OCI-LY7 (cell line): ENCODE measurements at regions of chr1 and their contacts with region 1.

Region 1: DNA sequence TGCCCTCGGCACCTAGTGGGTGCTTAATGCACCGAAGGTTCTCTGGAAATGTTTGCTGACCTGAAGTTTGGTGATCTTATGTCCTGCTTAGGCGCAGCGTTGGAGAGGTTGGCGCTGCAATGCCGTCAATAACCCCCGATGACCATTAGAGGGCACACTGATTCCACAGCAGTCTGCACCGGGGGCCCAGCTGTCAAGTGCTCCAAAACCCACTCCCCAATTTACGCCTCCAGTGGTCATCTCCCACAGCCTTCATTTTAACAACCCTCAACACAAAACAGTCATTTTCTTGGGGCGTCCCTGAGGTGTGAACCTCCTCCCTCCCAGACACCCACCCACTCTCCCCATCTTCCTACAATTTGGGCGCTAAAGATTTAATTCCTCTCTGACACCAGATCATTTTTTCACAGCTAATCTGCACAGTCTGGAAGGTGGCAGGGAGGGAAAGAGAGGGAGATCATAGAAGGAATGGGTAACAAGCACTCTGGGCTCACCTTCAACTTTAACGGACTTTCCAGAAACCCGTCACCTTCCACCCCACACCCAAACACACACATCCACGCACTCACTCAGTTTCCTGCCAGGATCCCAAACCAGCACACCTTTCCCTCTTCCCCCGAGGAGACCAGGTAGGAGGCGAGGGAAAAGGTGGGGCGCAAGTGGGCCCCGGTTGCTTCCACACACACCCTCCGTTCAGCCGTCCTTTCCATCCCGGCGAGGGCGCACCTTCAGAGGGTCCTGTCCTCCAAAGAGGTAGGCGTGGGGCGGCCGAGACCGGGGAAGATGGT is 576 bp upstream of the NPR1 start:
- DNase-seq: peak; percentile 71
- H3K4me3 ChIP-seq: no peak overlapping the region
- H3K27ac ChIP-seq: no peak overlapping the region
- H3K4me1 ChIP-seq: no peaks in the 10 kb centered on the region
- CTCF ChIP-seq: peak; percentile 99

Region 2: DNA sequence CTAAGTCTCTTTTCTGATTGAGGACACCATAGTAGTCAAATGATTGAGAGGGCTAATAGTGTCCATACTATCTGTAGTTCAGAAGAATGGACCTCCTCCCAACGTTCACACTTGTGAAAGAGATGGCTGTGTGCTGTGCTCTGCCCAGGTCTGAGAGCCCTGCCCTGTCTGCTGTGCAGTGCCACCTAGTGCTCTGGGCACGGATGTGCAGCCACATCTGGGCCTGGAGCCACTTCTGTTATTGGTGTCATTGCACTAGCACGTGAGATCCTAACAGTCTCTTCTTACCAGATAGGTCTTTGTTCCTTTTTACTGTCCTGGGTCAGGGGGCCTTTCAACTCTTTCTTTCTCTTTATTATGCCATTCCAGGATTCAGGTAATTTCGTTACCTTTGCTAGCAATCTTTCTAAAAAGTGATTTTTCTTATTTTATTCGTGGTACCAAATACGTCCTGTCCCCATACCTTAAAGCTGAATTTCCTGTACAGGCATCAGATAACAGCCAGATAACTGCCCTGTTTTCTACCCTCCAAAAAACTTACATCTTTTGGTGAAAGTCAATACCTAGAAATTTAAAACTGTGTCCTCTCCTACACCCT is 71.6 kb after region 1 on chr1:
- CTCF ChIA-PET with region 1: interaction called, 4 read pairs
- POLR2A ChIA-PET with region 1: no interaction called
- intact Hi-C with region 1: loop called (anchors 1 kb)
- DNase-seq: peak; percentile 82
- H3K4me3 ChIP-seq: no peak overlapping the region
- H3K27ac ChIP-seq: no peak overlapping the region
- H3K4me1 ChIP-seq: no peaks in the 10 kb centered on the region
- CTCF ChIP-seq: peak; percentile 96

Region 3: GRCh38 chr1:153771841-153772593 is 94.1 kb after region 1 on chr1:
- CTCF ChIA-PET with region 1: no interaction called
- POLR2A ChIA-PET with region 1: no interaction called
- intact Hi-C with region 1: loop called (anchors 1 kb)
- DNase-seq: peak; percentile 36
- H3K4me3 ChIP-seq: no peak overlapping the region
- H3K27ac ChIP-seq: no peak overlapping the region
- H3K4me1 ChIP-seq: peaks cover 28% of the 10 kb centered on the region
- CTCF ChIP-seq: peak; percentile 73